Common myeloid progenitor, CD34-positive (primary cell): ENCODE measurements at regions of chr17 and their contacts with region 1.

Region 1: DNA sequence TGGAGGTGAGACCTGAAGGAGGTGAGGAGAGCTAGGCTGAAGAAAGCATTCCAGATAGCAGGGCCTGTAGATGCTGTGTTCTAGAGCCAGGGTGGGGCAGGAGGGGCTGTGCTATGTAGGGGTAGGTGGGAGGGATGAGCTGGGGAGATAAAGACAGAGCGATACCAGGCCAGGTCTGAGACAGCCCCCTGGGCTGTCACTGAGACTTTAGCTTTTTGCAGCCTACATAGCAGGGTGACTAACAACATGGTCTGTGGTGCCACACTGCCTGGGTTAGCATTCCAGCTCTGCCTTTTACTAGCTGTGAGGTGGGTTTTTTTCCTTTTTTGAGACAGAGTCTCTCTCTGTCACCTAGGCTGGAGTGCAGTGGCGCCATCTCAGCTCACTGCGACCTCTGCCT is 14.3 kb downstream of the NUP85 start:
- DNase-seq: no peak
- H3K4me3 ChIP-seq: no peak overlapping the region
- H3K27ac ChIP-seq: no peak overlapping the region
- H3K4me1 ChIP-seq: no peaks in the 10 kb centered on the region
- H3K27me3 ChIP-seq: no peaks in the 10 kb centered on the region

Region 2: GRCh38 chr17:75205037-75205792 is 14.6 kb before region 1 on chr17 and contains the start of gene NUP85:
- CTCF ChIA-PET with region 1: interaction called, 13 read pairs
- POLR2A ChIA-PET with region 1: interaction called, 5 read pairs
- DNase-seq: peak; percentile 90
- H3K4me3 ChIP-seq: peak within 1 kb of the TSS; percentile 85 to 99 (median 96)
- H3K27ac ChIP-seq: peak within 1 kb of the TSS; percentile 97 to 99
- H3K4me1 ChIP-seq: peaks cover 6 to 17% (median 17%) of the 10 kb centered on the region in 4 experiments
- H3K27me3 ChIP-seq: no peaks in the 10 kb centered on the region